Aorta (tissue), 5 donors: ENCODE measurements at regions of chr21 and their contacts with region 1.

Region 1: DNA sequence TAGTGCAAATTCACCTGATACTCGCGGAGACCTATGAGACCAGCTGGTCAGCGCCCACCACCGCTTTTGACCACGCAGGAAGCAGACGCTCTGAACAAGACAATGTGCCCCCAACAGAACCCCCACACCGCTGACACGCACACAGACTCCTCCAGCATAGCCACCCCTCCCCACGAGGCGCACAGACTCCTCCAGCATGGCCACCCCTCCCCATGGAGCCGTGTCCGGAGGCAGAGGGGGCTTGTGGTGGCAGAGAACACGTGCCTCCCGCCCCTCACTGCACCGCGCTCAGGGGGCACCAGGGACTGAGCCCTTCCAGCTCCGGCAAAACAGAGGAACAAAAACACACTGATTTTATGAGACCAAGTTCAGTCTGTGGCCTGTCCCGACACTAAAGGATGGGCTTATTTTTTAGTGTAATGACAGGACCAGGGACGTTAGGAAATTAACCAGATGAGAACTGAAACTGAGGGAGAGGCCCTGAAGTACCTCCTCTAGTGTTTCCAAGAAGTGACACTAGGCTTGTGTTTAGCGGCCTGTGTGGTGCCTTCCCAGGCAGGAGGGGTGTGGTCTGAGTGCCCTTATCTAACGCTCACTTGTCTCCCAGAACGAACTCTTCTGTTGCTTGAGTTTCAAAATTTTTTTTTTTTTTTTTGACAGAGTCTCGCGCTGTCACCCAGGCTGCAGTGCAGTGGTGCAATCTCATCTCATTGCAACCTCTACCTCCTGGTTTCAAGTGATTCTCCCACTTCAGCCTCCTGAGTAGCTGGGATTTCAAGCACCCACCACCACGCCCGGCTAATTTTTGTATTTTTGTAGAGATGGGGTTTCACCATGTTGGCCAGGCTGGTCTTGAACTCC is 10.0 kb upstream of the AGPAT3 start:
- DNase-seq: no peak
- ATAC-seq: no peak
- H3K4me3 ChIP-seq: no peak overlapping the region
- H3K27ac ChIP-seq: no peak overlapping the region
- H3K4me1 ChIP-seq: no peaks in the 10 kb centered on the region
- H3K27me3 ChIP-seq: no peaks in the 10 kb centered on the region

Region 2: GRCh38 chr21:43939443-43940328 is 84.7 kb after region 1 on chr21:
- intact Hi-C with region 1: loop called in 1 of 2 experiments (anchors 10 kb)
- DNase-seq: no peak
- ATAC-seq: no peak
- H3K4me3 ChIP-seq: no peak overlapping the region
- H3K27ac ChIP-seq: no peak overlapping the region
- H3K4me1 ChIP-seq: no peaks in the 10 kb centered on the region
- H3K27me3 ChIP-seq: no peaks in the 10 kb centered on the region